Activated T-helper 2 cell treated with anti-CD3 and anti-CD28 coated beads, Interferon-gamma antibody, Interleukin-2, Interleukin-4, amounts not matched to agents 10 μg/mL and 5 μg/mL and 100 μg/mL, durations not matched to agents 14 hours and 24 hours and 36 hours (primary cell): ENCODE measurements at regions of chr1 and their contacts with region 1.

Region 1: GRCh38 chr1:209827384-209828262 is at the start of gene UTP25:
- DNase-seq: peak; percentile 89
- H3K4me3 Mint-ChIP-seq: peak within 1 kb of the TSS; percentile 89
- H3K27ac Mint-ChIP-seq: peak within 1 kb of the TSS; percentile 86
- H3K4me1 Mint-ChIP-seq: peaks cover 47% of the 10 kb centered on the region
- H3K27me3 Mint-ChIP-seq: peaks cover 6% of the 10 kb centered on the region
- total RNA-seq, gene UTP25: 18.7 and 19.6 TPM in 2 replicates

Region 2: GRCh38 chr1:209784265-209785169 is 43.1 kb before region 1 on chr1 and contains the start of gene C1orf74:
- intact Hi-C with region 1: loop called (anchors 1 kb)
- DNase-seq: peak; percentile 99
- H3K4me3 Mint-ChIP-seq: peak within 1 kb of the TSS; percentile 87
- H3K27ac Mint-ChIP-seq: peak within 1 kb of the TSS; percentile 92
- H3K4me1 Mint-ChIP-seq: peaks cover 51% of the 10 kb centered on the region
- H3K27me3 Mint-ChIP-seq: no peaks in the 10 kb centered on the region
- total RNA-seq, gene C1orf74: 2.8 and 3.0 TPM in 2 replicates

Region 3: DNA sequence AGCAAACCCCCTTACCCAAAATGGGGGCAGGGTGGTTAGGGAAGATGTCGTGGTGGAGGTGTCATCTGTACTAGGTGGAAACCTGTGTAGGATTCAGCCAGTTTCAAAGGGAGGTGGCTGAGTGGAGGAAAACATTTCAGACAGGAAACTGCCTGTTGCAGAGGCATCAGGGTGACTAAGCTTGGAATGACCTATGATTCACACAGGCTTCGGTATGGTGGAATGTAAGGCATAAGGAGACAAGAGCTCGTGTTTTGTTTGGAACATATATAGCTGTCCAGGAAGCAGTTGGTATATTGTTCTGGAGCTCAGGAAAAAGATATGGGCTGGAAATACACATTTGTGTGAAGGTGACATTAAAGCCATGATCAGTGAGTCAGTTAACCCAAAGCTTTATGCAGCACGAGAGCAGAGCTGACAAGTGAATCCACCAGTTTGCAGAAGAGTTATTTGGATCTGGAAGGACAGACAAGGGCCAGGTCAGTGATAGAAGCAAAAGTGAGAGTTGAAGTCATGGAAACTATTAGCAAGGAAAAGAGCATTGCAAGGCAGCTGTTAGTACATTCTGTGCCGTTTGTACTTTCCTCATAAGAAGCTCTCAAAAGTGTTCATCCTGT is 12.4 kb after region 1 on chr1:
- intact Hi-C with region 1: loop called (anchors 1 kb)
- DNase-seq: no peak
- H3K4me3 Mint-ChIP-seq: peak overlapping the region; percentile 49
- H3K27ac Mint-ChIP-seq: peak overlapping the region; percentile 91
- H3K4me1 Mint-ChIP-seq: peaks cover 53% of the 10 kb centered on the region
- H3K27me3 Mint-ChIP-seq: no peaks in the 10 kb centered on the region